Common myeloid progenitor, CD34-positive (primary cell): ENCODE measurements at regions of chr11 and their contacts with region 1.

Region 1: GRCh38 chr11:124865921-124866583 is 820 bp downstream of the ROBO3 start:
- DNase-seq: peak; percentile 42 to 68 (median 62)
- H3K4me3 ChIP-seq: peak overlapping the region in 4 of 7 experiments; percentile 23 to 61 (median 56)
- H3K27ac ChIP-seq: no peak overlapping the region
- H3K4me1 ChIP-seq: peaks cover 0 to 35% (median 20%) of the 10 kb centered on the region in 4 experiments
- H3K27me3 ChIP-seq: peaks cover 8 to 100% (median 82%) of the 10 kb centered on the region in 5 experiments

Region 2: GRCh38 chr11:124644426-124645280 is 221.4 kb before region 1 on chr11:
- CTCF ChIA-PET with region 1: interaction called, 11 read pairs
- POLR2A ChIA-PET with region 1: no interaction called
- DNase-seq: peak; percentile 60 to 69 (median 61)
- H3K4me3 ChIP-seq: peak overlapping the region in 2 of 7 experiments; percentile 4 to 48
- H3K27ac ChIP-seq: no peak overlapping the region
- H3K4me1 ChIP-seq: peaks cover 0 to 29% (median 13%) of the 10 kb centered on the region in 4 experiments
- H3K27me3 ChIP-seq: no peaks in the 10 kb centered on the region

Region 3: DNA sequence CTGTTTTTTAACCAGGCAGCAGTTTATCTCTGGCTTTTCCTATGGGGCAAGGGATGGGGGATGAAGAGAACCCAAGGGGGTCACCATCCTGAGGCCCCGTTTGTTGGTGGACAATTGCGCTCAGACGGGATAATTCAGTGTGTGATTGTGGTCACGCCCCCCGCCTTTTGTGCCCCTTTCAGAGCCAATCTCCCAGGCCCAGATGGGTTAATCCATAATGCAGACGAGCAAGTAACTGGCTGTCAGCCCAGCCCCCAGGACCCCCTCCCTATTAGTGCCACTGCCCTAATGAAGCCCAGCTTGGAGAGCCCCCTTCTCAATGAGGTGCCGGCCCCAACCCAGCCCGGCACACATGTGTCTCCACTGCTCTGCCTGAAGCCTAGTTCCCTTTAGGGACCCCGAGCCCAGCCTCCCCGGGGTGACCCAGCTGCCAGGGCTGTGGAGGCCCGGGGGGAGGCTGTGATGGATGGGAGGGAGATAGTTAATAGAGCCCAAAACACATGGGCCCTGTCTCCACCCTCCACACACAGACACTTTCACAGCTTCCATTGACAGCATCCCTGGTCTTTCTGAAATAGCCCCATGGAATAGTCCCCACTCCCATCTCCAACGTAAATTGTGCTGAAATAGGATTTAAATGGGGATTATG is 19.9 kb before region 1 on chr11:
- CTCF ChIA-PET with region 1: interaction called, 15 read pairs
- POLR2A ChIA-PET with region 1: no interaction called
- DNase-seq: no peak
- H3K4me3 ChIP-seq: no peak overlapping the region
- H3K27ac ChIP-seq: no peak overlapping the region
- H3K4me1 ChIP-seq: peaks cover 0 to 10% (median 5%) of the 10 kb centered on the region in 4 experiments
- H3K27me3 ChIP-seq: peaks cover 35 to 100% (median 72%) of the 10 kb centered on the region in 5 experiments

Region 4: DNA sequence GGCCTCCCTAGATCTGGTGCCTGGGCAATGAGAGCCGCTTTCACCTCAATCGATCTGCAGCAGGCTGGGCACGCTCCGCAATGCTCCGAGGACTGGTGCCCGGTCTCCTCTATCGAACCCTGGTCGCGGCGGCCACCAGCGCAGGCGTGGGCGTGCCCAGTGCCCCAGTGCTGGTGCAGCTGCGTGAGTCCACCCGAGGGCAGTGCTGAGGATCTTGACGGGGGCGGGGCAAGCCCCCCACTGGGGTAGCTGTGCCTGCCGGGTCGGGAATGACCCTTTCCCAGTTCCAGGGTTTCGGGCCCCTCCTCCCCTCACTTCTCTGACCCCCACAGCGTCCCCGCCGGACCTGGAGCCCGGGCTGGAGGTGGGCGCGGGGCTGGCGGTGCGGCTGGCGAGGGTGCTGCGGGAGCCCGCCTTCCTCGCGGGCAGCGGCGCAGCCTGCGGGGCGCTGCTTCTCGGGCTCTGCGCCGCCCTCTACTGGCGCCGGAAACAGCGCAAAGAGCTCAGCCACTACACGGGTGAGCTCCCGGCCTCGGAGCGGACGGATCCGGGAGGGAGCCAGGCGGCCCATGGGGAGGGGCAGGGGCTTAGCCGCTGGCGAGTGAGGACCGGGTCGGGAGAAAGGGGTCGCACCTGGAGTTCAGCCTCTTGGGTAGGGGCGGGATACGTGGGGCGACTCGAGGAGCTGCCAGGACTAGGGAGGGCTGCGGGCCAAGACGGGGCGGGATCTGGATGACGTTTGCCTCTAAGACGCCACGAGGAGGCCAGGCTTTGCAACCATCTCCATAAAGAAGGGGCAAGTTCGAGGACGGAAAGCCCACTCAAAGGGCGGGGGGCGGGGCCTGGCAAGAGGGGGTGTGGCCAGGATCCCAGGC is 10.1 kb after region 1 on chr11:
- CTCF ChIA-PET with region 1: interaction called, 14 read pairs
- POLR2A ChIA-PET with region 1: no interaction called
- DNase-seq: peak; percentile 95 to 98 (median 98)
- H3K4me3 ChIP-seq: peak overlapping the region; percentile 40 to 89 (median 72)
- H3K27ac ChIP-seq: peak overlapping the region in 1 of 2 experiments; percentile 75
- H3K4me1 ChIP-seq: peaks cover 0 to 53% (median 42%) of the 10 kb centered on the region in 4 experiments
- H3K27me3 ChIP-seq: peaks cover 0 to 44% (median 28%) of the 10 kb centered on the region in 5 experiments

Region 5: GRCh38 chr11:125423247-125423849 is 557.3 kb after region 1 on chr11:
- CTCF ChIA-PET with region 1: no interaction called
- POLR2A ChIA-PET with region 1: interaction called, 11 read pairs
- DNase-seq: no peak
- H3K4me3 ChIP-seq: no peak overlapping the region
- H3K27ac ChIP-seq: no peak overlapping the region
- H3K4me1 ChIP-seq: no peaks in the 10 kb centered on the region
- H3K27me3 ChIP-seq: peaks cover 0 to 21% (median 15%) of the 10 kb centered on the region in 5 experiments